ENCODE measurements at regions of chr13 and their contacts with region 1.

Region 1: GRCh38 chr13:95403828-95404522 is 102.7 kb upstream of the ABCC4 start:
- DNase-seq: peak; percentile 91
- H3K4me3 ChIP-seq: peak overlapping the region in 3 of 4 donors; percentile 26 to 39 (median 35)
- H3K27ac ChIP-seq: no peak overlapping the region
- H3K4me1 ChIP-seq: peaks cover 0 to 9% (median 6%) of the 10 kb centered on the region in 4 donors
- H3K27me3 ChIP-seq: no peaks in the 10 kb centered on the region
- CTCF ChIP-seq: peak; percentile 87 to 94 (median 94)
- EP300 ChIP-seq: no peak
- POLR2A ChIP-seq: no peak

Region 2: GRCh38 chr13:95301183-95301967 is 102.6 kb before region 1 on chr13 and contains the start of gene ABCC4:
- intact Hi-C with region 1: loop called (anchors 5 kb)
- DNase-seq: peak; percentile 88
- H3K4me3 ChIP-seq: peak within 1 kb of the TSS; percentile 62 to 96 (median 87)
- H3K27ac ChIP-seq: peak within 1 kb of the TSS; percentile 71 to 85 (median 83)
- H3K4me1 ChIP-seq: peaks cover 0 to 44% (median 23%) of the 10 kb centered on the region in 4 donors
- H3K27me3 ChIP-seq: no peaks in the 10 kb centered on the region
- CTCF ChIP-seq: no peak
- EP300 ChIP-seq: no peak
- POLR2A ChIP-seq: no peak
- total RNA-seq, gene ABCC4: 24.3 to 56.3 (median 43.1) TPM

Measured in sigmoid colon (tissue), 7 donors.